GM10248 (cell line): ENCODE measurements at regions of chr4 and their contacts with region 1.

Region 1: DNA sequence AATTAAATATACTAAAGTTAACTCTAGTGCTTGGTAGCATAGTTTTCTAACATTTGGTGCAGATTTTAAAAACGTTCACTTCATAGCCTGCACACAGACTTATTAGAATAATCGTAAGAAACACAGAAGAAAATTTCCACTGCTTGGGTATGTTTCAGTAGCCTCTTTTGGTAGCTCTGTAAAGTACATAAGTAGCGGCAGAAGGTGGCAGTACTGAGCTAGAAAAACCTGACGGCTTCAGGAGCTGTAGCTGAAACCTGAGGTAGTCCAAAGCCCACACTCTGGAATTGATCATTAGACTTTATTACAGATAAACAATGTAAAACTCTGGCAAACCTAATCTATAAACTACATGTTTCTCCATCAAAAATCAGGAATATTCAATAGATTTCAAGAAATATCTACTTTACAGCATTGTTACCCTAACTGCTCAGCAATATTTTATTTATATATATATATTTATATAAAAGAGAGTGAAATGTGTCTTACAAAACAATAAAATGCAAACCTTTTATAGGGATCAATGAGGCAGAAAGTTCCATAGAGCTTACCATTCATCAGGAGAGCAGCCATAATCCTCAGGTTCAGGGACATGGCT is 88.2 kb downstream of the ATP8A1 start:
- DNase-seq: peak; percentile 48
- CTCF ChIP-seq: peak; percentile 68

Region 2: GRCh38 chr4:42588909-42589308 is 20.2 kb after region 1 on chr4:
- CTCF ChIA-PET with region 1: interaction called, 16 read pairs
- POLR2A ChIA-PET with region 1: no interaction called
- DNase-seq: no peak
- CTCF ChIP-seq: no peak

Region 3: GRCh38 chr4:42750091-42750490 is 181.4 kb after region 1 on chr4:
- CTCF ChIA-PET with region 1: interaction called, 18 read pairs
- POLR2A ChIA-PET with region 1: no interaction called
- DNase-seq: no peak
- CTCF ChIP-seq: peak; percentile 21

Region 4: DNA sequence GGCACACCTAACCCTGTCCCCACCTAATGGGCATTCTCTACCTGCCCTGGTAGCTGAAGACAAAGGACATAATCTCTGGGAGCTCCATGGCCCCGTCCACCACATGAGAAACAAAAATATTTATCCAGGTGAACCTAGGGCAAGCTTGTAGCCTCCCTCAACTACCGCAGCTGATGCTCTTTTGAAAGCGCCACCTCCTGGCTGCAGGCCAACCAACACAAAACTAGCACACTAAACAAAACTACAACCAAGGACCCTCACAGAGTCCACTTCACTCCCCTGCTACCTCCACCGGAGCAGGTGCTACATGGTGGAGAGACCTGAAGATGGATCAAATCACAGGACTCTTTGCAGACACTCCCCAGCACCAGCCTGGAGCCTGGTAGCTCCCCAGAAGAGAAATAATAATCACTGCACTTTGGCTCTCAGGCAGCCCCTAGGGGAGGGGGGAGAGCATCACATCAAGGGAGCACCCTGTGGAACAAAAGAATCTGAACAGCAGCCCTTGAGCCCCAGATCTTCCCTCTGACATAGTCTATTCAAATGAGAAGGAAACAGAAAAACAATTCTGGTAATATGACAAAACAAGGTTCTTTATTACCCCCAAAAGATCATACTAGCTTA is 199.5 kb after region 1 on chr4:
- CTCF ChIA-PET with region 1: interaction called, 21 read pairs
- POLR2A ChIA-PET with region 1: no interaction called
- DNase-seq: no peak
- CTCF ChIP-seq: no peak

Region 5: GRCh38 chr4:42816189-42816879 is 247.6 kb after region 1 on chr4:
- CTCF ChIA-PET with region 1: interaction called, 11 read pairs
- POLR2A ChIA-PET with region 1: no interaction called
- DNase-seq: no peak
- CTCF ChIP-seq: no peak

Region 6: DNA sequence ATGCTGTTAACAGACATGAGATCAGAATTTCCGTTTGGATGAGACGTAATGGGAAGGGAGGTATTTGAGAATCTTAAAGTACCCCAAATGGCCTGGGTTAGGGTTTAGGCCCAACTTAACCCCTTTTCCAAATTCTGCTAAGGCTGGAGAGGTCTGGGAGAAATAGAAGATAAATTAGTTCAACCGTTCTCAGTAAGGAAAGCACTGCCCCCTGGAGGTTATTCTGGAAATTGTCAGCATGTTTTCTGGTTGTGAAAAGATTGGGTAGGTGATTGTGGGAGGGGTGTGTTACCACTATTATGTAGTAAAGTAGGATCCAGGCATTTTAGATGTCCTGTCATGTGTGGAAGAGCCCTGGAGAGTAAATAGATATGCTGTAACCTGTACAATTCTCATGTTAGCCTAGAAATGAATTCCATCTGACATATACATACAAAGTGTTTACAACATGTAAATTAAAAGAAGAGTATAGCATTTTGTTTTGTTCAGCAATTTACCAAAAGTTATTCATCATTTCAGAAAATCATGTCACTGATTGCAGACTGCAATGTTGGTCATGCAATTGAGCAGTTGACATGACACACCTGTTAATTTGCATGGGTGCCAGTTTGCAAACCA is 297.0 kb after region 1 on chr4:
- CTCF ChIA-PET with region 1: interaction called, 15 read pairs
- POLR2A ChIA-PET with region 1: no interaction called
- DNase-seq: peak; percentile 29
- CTCF ChIP-seq: peak; percentile 74